ENCODE measurements at regions of chr12 and their contacts with region 1.

Region 1: DNA sequence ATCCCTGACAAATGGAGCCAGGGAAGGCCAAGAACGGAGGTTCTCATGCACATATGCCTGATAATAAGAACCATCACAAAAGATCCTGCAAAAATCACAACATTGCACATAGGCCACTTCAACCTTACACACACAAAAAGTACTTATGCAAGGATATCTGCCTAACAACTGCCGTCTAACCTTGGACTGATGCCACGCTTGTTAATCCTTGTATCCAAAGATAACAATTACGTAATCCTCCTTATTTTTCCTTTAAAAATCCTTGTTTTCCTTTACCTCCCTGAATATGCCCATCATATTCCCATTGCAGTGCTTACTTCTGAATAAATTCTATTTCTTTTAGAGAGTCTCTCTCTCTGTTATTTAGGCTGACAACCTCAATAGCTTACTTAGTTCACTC is 59.5 kb downstream of the TMEM116 start:
- DNase-seq: no peak
- H3K4me3 ChIP-seq: no peak overlapping the region
- H3K27ac ChIP-seq: no peak overlapping the region
- H3K4me1 ChIP-seq: no peaks in the 10 kb centered on the region
- H3K27me3 ChIP-seq: no peaks in the 10 kb centered on the region
- CTCF ChIP-seq: no peak

Region 2: GRCh38 chr12:111482462-111482861 is 471.0 kb before region 1 on chr12:
- CTCF ChIA-PET with region 1: no interaction called
- POLR2A ChIA-PET with region 1: interaction called, 27 read pairs
- intact Hi-C with region 1: no loop called
- DNase-seq: no peak
- H3K4me3 ChIP-seq: no peak overlapping the region
- H3K27ac ChIP-seq: no peak overlapping the region
- H3K4me1 ChIP-seq: no peaks in the 10 kb centered on the region
- H3K27me3 ChIP-seq: no peaks in the 10 kb centered on the region
- CTCF ChIP-seq: peak; percentile 48; the same call in 1 of the 2 replicates

Region 3: DNA sequence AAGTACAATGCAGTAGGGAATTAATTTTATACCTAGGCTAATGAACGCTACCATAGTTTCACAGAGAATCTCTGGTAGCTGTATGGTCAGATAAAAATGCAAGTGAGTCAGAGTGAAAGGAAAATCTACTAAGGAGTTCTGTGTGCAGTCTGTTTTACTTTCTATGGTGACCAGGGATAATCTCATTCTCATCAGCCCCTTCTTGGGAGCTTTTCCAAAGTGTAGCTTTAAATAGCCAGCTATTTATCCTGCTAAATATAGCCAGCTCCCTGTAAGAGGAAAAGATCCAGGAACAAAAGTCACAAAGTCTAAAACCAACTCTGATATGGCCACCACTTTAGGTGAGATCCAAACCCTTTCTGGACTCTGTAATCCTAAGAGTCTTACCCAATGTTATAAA is 16.0 kb before region 1 on chr12:
- CTCF ChIA-PET with region 1: no interaction called
- POLR2A ChIA-PET with region 1: interaction called, 17 read pairs
- intact Hi-C with region 1: no loop called
- DNase-seq: no peak
- H3K4me3 ChIP-seq: no peak overlapping the region
- H3K27ac ChIP-seq: no peak overlapping the region
- H3K4me1 ChIP-seq: no peaks in the 10 kb centered on the region
- H3K27me3 ChIP-seq: no peaks in the 10 kb centered on the region
- CTCF ChIP-seq: no peak

Measured in PC-9 (cell line).